CD8-positive, alpha-beta T cell (primary cell): ENCODE measurements at regions of chr4 and their contacts with region 1.

Region 1: DNA sequence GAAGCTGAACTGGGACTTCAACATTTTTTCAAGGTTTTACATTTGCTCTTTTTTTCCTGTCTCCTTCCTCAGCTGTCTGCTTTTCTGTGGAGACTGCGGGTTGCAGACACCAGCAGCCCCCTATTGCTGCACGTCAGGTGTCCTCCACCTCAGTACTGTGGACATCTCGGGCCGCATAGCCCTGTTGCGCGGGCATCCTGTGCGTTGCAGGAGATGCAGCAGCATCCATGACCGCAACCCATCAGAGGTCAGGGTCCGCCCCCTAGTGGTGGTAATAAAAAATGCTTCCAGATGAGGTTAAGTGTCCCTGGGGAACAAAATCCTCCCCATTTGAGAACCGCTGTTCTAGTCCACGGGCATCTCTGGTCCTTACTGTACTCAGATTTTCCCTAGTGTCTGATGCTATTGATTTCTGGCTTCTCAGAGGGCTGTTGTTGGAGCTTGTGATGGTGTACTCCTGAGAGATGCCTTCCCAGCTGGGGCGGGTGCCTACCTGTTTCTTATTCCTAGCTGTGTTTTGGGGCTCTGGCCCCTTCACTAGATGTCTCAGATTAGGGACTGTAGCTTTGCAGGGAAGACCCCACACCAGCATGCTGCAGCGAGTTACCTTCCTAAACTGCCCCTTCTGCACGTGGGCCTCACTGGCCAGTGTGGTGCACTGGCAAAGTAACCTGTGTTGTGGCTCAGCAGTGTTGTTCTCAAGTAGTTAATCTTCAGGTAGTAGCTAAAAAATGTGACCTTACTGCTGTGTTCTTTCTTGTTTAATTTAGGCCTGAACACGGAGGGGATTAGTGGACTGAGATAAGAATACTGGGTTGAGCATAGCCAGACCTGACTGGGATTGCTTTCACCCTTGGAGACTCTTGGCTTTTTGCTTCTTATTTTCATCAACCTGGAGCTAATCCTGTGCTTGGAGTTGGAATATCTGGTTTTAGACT is 28.2 kb downstream of the NSD2 start:
- DNase-seq: peak; percentile 30 to 87 (median 74)
- ATAC-seq: peak; percentile 99
- H3K4me3 ChIP-seq: no peak overlapping the region
- H3K4me3 Mint-ChIP-seq: no peak overlapping the region
- H3K27ac ChIP-seq: no peak overlapping the region
- H3K27ac Mint-ChIP-seq: no peak overlapping the region
- H3K4me1 ChIP-seq: peaks cover 6% of the 10 kb centered on the region
- H3K4me1 Mint-ChIP-seq: peaks cover 8% of the 10 kb centered on the region
- H3K27me3 ChIP-seq: no peaks in the 10 kb centered on the region
- H3K27me3 Mint-ChIP-seq: no peaks in the 10 kb centered on the region
- CTCF ChIP-seq: peak; percentile 89

Region 2: GRCh38 chr4:1693129-1693896 is 206.1 kb before region 1 on chr4:
- CTCF ChIA-PET with region 1: interaction called, 24 read pairs
- POLR2A ChIA-PET with region 1: no interaction called
- intact Hi-C with region 1: no loop called
- DNase-seq: peak; percentile 48 to 88 (median 82)
- ATAC-seq: peak; percentile 96
- H3K4me3 ChIP-seq: no peak overlapping the region
- H3K4me3 Mint-ChIP-seq: no peak overlapping the region
- H3K27ac ChIP-seq: no peak overlapping the region
- H3K27ac Mint-ChIP-seq: peak overlapping the region; percentile 7
- H3K4me1 ChIP-seq: no peaks in the 10 kb centered on the region
- H3K4me1 Mint-ChIP-seq: peaks cover 4% of the 10 kb centered on the region
- H3K27me3 ChIP-seq: no peaks in the 10 kb centered on the region
- H3K27me3 Mint-ChIP-seq: no peaks in the 10 kb centered on the region
- CTCF ChIP-seq: peak; percentile 83

Region 3: DNA sequence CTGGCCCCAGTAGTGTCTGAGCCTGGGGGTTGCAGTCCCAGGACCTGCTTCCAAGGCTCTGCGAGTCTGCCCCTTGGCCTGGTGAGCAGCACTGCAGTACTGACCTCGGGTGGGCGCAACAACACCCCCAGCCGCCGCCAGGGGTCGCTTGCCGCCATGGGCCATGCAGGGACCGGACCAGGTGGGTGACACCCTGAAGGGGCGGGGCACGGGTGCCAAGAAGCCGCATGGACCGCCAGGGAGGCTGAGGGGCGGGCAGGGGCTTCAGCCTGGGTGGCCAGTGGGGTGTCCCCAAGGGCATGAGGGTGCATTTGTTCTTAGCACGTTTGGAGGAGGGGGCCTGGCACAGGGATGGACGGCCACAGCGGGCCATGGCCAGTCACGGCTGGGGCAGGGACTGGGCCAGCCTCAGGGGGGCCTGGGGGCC is 153.1 kb before region 1 on chr4:
- CTCF ChIA-PET with region 1: interaction called, 220 read pairs
- POLR2A ChIA-PET with region 1: interaction called, 3 read pairs
- intact Hi-C with region 1: loop called (anchors 1 kb)
- DNase-seq: peak; percentile 62 to 84 (median 78)
- ATAC-seq: peak; percentile 76
- H3K4me3 ChIP-seq: no peak overlapping the region
- H3K4me3 Mint-ChIP-seq: no peak overlapping the region
- H3K27ac ChIP-seq: no peak overlapping the region
- H3K27ac Mint-ChIP-seq: no peak overlapping the region
- H3K4me1 ChIP-seq: peaks cover 5% of the 10 kb centered on the region
- H3K4me1 Mint-ChIP-seq: no peaks in the 10 kb centered on the region
- H3K27me3 ChIP-seq: no peaks in the 10 kb centered on the region
- H3K27me3 Mint-ChIP-seq: peaks cover 3% of the 10 kb centered on the region
- CTCF ChIP-seq: peak; percentile 58

Region 4: DNA sequence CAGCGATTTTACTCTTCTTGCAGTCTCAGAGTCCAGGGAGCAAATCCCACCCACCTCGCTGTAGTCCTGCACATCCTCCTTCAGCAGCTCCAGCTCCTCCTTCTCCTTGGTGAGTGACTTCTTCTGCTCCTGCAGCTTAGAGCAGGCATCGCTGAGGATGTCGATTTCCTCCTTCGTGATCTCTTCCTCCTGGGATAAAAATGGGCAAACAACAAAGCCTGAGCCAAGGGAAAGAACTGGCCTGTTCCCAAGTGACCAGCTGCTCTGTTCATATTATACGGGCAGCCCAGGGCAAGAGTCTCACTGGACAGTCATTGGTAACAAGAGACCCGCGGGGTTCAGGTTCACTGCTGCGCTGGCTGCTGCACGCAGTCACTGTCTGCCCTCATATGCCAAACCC is 80.1 kb before region 1 on chr4:
- CTCF ChIA-PET with region 1: interaction called, 27 read pairs
- POLR2A ChIA-PET with region 1: no interaction called
- intact Hi-C with region 1: no loop called
- DNase-seq: no peak
- ATAC-seq: no peak
- H3K4me3 ChIP-seq: no peak overlapping the region
- H3K4me3 Mint-ChIP-seq: no peak overlapping the region
- H3K27ac ChIP-seq: no peak overlapping the region
- H3K27ac Mint-ChIP-seq: no peak overlapping the region
- H3K4me1 ChIP-seq: no peaks in the 10 kb centered on the region
- H3K4me1 Mint-ChIP-seq: no peaks in the 10 kb centered on the region
- H3K27me3 ChIP-seq: no peaks in the 10 kb centered on the region
- H3K27me3 Mint-ChIP-seq: no peaks in the 10 kb centered on the region
- CTCF ChIP-seq: no peak

Region 5: GRCh38 chr4:1856042-1856788 is 43.2 kb before region 1 on chr4 and contains the start of gene LETM1:
- CTCF ChIA-PET with region 1: interaction called, 8 read pairs
- POLR2A ChIA-PET with region 1: interaction called, 3 read pairs
- intact Hi-C with region 1: loop called (anchors 1 kb)
- DNase-seq: peak; percentile 73 to 96 (median 92)
- ATAC-seq: peak; percentile 96
- H3K4me3 ChIP-seq: peak within 1 kb of the TSS; percentile 83 to 91
- H3K4me3 Mint-ChIP-seq: peak within 1 kb of the TSS; percentile 80
- H3K27ac ChIP-seq: peak within 1 kb of the TSS; percentile 47 to 50
- H3K27ac Mint-ChIP-seq: peak within 1 kb of the TSS; percentile 45
- H3K4me1 ChIP-seq: peaks cover 19% of the 10 kb centered on the region
- H3K4me1 Mint-ChIP-seq: peaks cover 44% of the 10 kb centered on the region
- H3K27me3 ChIP-seq: no peaks in the 10 kb centered on the region
- H3K27me3 Mint-ChIP-seq: no peaks in the 10 kb centered on the region
- CTCF ChIP-seq: no peak
- total RNA-seq, gene LETM1: 22.7 to 25.9 TPM

Region 6: DNA sequence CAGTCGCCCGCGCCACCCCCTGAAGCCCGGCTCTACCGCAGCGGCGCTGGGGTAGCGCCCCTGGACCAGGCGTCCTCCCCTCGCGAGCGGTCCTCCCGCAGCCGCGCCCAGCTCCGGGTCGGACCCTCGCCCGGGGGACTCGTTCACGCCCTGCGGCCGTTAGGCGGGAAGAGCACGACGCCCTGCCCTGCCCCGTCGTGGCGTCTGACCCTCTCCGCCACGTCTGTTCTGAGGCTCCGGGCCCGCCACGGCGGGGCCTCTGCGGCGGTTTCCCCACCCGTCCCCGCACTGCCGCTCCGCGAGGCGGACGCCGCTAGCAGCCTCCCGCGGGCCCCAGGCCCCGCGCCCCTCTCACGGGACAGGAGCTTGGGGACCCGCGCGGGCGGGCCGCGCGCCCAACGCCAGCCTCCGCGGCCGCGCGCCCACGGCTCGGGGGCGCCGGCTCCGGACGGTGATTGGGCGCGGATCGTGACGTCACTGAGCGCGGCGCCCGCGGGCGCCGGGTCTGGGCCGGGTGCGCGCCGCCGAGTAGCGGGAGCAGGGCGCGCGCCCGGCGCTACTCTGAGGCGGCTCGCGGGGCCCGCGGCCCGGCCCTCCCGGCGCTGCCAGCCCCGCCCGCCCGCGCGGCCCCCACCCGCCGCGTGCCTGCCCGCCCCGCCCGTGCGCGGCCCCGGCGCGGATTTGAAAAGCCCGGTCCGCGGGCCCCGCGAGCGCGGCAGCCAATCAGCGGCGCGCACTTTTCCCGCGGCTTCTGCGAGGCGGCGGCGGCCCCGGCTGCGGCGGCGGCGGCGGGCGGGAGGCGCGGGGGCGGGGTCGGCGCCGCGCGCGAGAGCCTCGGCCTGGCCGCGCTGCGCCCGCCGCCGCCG is 28.6 kb before region 1 on chr4 and contains the start of gene NSD2:
- CTCF ChIA-PET with region 1: interaction called, 37 read pairs
- POLR2A ChIA-PET with region 1: no interaction called
- intact Hi-C with region 1: no loop called
- DNase-seq: peak; percentile 81 to 97 (median 88)
- ATAC-seq: peak; percentile 64
- H3K4me3 ChIP-seq: peak within 1 kb of the TSS; percentile 66 to 98
- H3K4me3 Mint-ChIP-seq: peak within 1 kb of the TSS; percentile 83
- H3K27ac ChIP-seq: peak within 1 kb of the TSS; percentile 81 to 98
- H3K27ac Mint-ChIP-seq: peak within 1 kb of the TSS; percentile 89
- H3K4me1 ChIP-seq: peaks cover 21% of the 10 kb centered on the region
- H3K4me1 Mint-ChIP-seq: peaks cover 31% of the 10 kb centered on the region
- H3K27me3 ChIP-seq: no peaks in the 10 kb centered on the region
- H3K27me3 Mint-ChIP-seq: no peaks in the 10 kb centered on the region
- CTCF ChIP-seq: no peak
- total RNA-seq, gene NSD2: 27.3 to 32.5 TPM

Region 7: DNA sequence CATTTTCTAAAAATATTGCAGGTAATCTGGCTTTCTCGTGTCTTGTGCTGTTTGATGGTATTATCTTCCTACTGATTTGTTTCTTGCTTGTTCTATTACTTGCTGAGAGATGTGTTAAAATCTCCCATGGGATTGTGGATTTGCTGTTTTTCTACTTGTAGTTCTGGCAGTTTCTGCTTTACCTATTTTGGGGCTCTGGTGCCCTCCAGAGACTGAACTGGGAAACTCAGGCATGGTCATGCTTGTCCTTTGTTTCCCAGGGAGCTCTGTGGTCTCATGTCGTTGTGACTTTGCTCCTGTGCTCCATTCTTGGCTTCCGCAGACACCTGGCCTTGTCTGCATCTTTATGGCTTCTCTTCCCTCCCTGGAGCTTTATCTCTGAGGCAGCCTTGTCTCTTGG is 11.2 kb after region 1 on chr4:
- CTCF ChIA-PET with region 1: interaction called, 43 read pairs
- POLR2A ChIA-PET with region 1: interaction called, 4 read pairs
- intact Hi-C with region 1: no loop called
- DNase-seq: peak in 1 of 9 experiments; percentile 22
- ATAC-seq: no peak
- H3K4me3 ChIP-seq: no peak overlapping the region
- H3K4me3 Mint-ChIP-seq: no peak overlapping the region
- H3K27ac ChIP-seq: no peak overlapping the region
- H3K27ac Mint-ChIP-seq: no peak overlapping the region
- H3K4me1 ChIP-seq: no peaks in the 10 kb centered on the region
- H3K4me1 Mint-ChIP-seq: peaks cover 4% of the 10 kb centered on the region
- H3K27me3 ChIP-seq: no peaks in the 10 kb centered on the region
- H3K27me3 Mint-ChIP-seq: no peaks in the 10 kb centered on the region
- CTCF ChIP-seq: no peak